ENCODE measurements at regions of chr1 and their contacts with region 1.

Region 1: DNA sequence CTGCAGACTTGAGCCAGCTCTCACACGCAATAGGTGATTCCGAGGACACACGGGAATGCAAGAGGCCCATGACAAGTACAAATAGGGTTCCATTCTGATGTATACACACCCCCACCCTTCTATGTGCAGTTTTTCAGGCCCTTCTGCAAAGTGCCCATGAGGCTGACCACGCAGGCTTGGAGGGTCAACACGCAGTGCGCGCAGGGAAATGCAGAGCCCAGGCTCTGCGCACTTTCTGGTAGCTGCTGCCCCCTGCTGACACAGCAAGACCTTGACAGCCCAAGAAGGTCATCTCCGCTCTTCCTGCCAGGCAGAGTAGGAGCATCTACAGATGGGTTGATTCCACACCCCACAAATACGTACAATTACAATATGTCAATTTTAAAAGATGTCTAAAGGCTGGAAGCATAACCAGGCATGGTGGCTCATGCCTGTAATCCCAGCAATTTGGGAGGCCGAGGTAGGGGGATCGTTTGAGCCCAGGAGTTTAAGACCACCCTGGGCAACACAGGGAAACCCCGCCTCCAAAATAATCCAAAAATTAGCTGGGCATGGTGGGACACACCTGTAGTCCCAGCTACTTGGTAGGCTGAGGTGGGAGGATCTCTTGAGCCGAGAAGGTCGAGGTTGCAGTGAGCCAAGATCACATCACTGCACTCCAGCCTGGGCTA is 18.5 kb downstream of the SH3BP5L start:
- DNase-seq: peak in 5 of 6 donors; percentile 40 to 78 (median 59)
- ATAC-seq: peak; percentile 74 to 89 (median 88)
- H3K4me3 ChIP-seq: no peak overlapping the region
- H3K27ac ChIP-seq: no peak overlapping the region
- H3K4me1 ChIP-seq: no peaks in the 10 kb centered on the region
- H3K27me3 ChIP-seq: no peaks in the 10 kb centered on the region
- CTCF ChIP-seq: peak; percentile 26 to 75 (median 69)

Region 2: DNA sequence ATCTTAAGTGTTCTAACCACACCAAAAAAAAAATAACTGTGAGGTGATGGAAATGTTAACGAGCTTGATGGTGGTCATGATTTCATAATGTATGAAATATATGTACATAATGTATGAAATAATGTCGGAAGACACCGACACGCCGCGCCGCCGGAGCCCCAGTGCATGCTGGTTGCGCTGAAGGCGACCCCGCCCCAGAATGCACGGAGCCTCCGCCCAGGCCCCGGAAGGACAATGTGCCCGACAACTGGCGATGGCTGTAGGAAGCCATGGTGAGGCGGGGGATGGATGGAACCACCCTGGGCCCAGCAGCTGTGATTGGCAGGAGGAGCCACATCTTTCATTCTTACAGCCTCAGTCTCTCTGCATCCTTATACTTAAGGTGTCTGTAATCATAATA is 217.1 kb before region 1 on chr1:
- intact Hi-C with region 1: no loop called
- DNase-seq: peak in 1 of 6 donors; percentile 22
- ATAC-seq: no peak
- H3K4me3 ChIP-seq: no peak overlapping the region
- H3K27ac ChIP-seq: no peak overlapping the region
- H3K4me1 ChIP-seq: no peaks in the 10 kb centered on the region
- H3K27me3 ChIP-seq: peaks cover 0 to 3% (median 0%) of the 10 kb centered on the region in 4 donors
- CTCF ChIP-seq: no peak

Region 3: DNA sequence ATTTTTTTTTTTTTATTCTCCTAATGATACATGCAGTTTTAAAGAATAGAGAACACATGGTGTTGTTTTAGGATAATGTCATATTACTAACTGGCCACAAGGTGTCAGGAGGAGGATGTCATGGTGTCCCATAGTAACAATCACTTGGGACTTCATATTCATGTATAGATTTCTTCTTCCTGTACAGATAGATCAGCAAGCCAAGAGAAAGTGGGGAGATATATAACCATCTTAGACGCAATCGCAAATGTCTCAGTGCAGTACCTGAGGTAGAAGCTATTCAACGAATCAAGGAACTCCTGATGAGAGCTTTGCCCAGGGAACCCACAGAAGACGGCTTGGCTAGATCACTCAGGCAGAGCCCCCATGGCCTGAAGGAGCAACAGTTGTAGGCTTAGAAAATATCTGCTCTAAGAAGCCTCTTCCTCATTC is 184.6 kb before region 1 on chr1:
- intact Hi-C with region 1: loop called in 2 of 3 experiments (anchors 5 kb)
- DNase-seq: no peak
- ATAC-seq: peak in 3 of 4 donors; percentile 87 to 91 (median 88)
- H3K4me3 ChIP-seq: no peak overlapping the region
- H3K27ac ChIP-seq: no peak overlapping the region
- H3K4me1 ChIP-seq: no peaks in the 10 kb centered on the region
- H3K27me3 ChIP-seq: no peaks in the 10 kb centered on the region
- CTCF ChIP-seq: peak in 3 of 4 donors; percentile 54 to 60 (median 57)

Region 4: GRCh38 chr1:248703674-248704073 is 103.5 kb before region 1 on chr1:
- intact Hi-C with region 1: loop called in 1 of 3 experiments (anchors 5 kb)
- DNase-seq: no peak
- ATAC-seq: no peak
- H3K4me3 ChIP-seq: no peak overlapping the region
- H3K27ac ChIP-seq: no peak overlapping the region
- H3K4me1 ChIP-seq: no peaks in the 10 kb centered on the region
- H3K27me3 ChIP-seq: no peaks in the 10 kb centered on the region
- CTCF ChIP-seq: no peak

Region 5: DNA sequence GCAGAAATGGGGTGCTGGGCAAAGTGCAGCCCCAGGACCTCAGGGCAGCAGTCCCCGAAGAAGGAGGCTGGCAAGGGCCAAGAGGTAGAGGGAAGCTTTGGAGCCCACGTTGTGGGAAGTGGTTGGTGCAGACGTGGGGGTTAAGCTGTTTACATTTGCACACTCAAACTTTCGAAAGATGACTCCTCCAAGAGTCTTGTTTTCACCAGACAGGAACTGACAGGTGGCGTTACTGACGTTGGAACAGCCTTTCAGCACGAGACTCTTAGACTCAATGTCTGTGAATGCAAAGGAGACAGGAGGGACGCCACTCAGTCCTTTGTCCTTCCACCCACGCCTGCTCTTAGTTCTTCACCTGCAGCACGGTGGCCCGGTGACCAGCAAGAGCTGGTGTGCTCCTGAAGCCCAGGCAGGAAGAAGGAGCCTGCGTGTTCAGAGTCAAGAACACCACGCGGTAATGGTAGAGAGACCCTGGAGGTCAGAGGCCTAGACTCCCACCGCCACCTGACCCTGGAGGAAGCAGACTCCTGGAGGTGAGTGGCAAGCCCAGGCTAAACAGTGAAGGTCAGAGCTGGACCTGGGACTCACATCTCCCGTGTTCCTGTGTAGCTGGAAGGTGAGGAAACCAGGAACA is 67.5 kb before region 1 on chr1:
- intact Hi-C with region 1: no loop called
- DNase-seq: no peak
- ATAC-seq: no peak
- H3K4me3 ChIP-seq: no peak overlapping the region
- H3K27ac ChIP-seq: no peak overlapping the region
- H3K4me1 ChIP-seq: no peaks in the 10 kb centered on the region
- H3K27me3 ChIP-seq: no peaks in the 10 kb centered on the region
- CTCF ChIP-seq: no peak

Region 6: DNA sequence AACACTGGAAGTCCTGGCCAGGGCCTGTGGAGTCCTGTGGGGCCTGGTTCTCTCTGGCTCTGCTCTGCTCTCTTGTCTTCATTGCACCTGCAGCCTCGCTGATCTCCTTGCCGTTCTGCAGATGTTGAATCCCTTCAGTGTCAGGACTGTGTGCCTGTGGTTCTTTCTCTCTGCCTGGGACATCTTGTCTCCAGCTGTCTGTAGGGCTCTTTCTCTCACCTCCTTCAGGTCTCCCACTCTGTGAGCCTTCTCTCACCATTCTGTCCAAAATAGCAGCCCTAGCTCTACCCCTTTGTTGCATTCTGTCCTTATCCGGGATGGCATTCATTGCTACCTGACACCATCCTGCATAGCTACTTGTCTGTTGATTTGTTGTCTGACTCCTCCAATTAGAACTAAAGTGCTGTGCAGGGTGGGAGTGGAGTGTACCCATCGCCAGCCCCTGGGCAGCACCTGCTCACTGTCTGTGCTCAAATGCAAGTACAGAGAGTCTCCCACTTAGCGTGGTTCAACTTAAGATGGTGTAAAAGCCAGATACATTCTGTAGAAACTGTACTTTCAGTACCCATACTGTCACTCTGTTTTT is 107.7 kb after region 1 on chr1:
- intact Hi-C with region 1: no loop called
- DNase-seq: no peak
- ATAC-seq: no peak
- H3K4me3 ChIP-seq: no peak overlapping the region
- H3K27ac ChIP-seq: no peak overlapping the region
- H3K4me1 ChIP-seq: no peaks in the 10 kb centered on the region
- H3K27me3 ChIP-seq: no peaks in the 10 kb centered on the region
- CTCF ChIP-seq: no peak

Measured in pancreas (tissue), 10 donors.